ENCODE measurements at regions of chr17 and their contacts with region 1.

Region 1: GRCh38 chr17:17237026-17237799 is at the start of gene FLCN:
- DNase-seq: peak; percentile 92
- H3K4me3 ChIP-seq: peak within 1 kb of the TSS; percentile 76 to 97 (median 89)
- H3K27ac ChIP-seq: peak within 1 kb of the TSS; percentile 88 to 96 (median 90)
- H3K4me1 ChIP-seq: peaks cover 10 to 41% (median 16%) of the 10 kb centered on the region in 4 donors
- H3K27me3 ChIP-seq: no peaks in the 10 kb centered on the region
- CTCF ChIP-seq: peak in 1 of 5 experiments; percentile 35
- EP300 ChIP-seq: no peak
- POLR2A ChIP-seq: peak; percentile 76
- total RNA-seq, gene FLCN: 43.0 to 560 (median 81.1) TPM

Region 2: DNA sequence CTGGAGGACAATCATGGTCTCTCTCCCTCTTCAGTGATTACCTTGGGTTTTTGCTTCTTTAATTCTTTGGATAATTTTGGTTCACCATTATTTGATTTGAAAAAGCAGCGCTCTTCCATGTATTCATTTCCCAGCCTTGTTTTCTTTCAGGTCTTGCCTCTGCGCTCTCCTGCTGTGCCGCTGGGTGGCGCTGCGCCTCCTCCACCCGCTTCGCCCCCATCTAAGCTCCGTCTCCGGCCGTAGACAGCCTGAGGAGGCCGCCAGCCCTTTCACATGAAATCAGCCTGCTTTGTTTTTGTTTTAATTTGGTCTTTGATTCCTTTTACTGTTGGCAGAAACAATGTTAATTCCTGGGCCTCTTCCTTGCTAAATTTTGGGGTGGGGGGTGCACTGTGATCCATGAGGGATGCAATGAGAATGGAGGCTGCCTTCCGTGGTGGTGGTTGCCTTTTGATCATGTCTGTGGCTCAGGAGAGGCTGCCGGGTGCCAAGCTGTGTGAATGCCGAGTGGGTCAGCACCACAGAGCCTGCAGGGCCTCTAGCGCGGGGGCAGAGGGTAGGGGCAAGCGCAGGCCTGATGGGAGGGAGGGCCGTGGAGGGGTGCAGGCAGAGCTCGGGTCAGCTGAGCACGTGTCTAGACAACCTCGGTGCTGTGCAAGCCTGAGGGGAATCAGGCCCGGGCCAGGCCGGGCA is 95.2 kb before region 1 on chr17:
- in situ Hi-C with region 1: no loop called
- intact Hi-C with region 1: loop called (anchors 10 kb)
- DNase-seq: no peak
- H3K4me3 ChIP-seq: no peak overlapping the region
- H3K27ac ChIP-seq: no peak overlapping the region
- H3K4me1 ChIP-seq: peaks cover 0 to 3% (median 0%) of the 10 kb centered on the region in 4 donors
- H3K27me3 ChIP-seq: no peaks in the 10 kb centered on the region
- CTCF ChIP-seq: peak; percentile 58 to 73 (median 63)
- EP300 ChIP-seq: no peak
- POLR2A ChIP-seq: no peak

Region 3: GRCh38 chr17:17216776-17217175 is 20.4 kb before region 1 on chr17:
- in situ Hi-C with region 1: no loop called
- intact Hi-C with region 1: loop called (anchors 1 kb)
- DNase-seq: no peak
- H3K4me3 ChIP-seq: no peak overlapping the region
- H3K27ac ChIP-seq: no peak overlapping the region
- H3K4me1 ChIP-seq: no peaks in the 10 kb centered on the region
- H3K27me3 ChIP-seq: no peaks in the 10 kb centered on the region
- CTCF ChIP-seq: no peak
- EP300 ChIP-seq: no peak
- POLR2A ChIP-seq: no peak

Region 4: GRCh38 chr17:17322516-17323510 is 85.6 kb after region 1 on chr17:
- in situ Hi-C with region 1: no loop called
- intact Hi-C with region 1: no loop called
- DNase-seq: no peak
- H3K4me3 ChIP-seq: no peak overlapping the region
- H3K27ac ChIP-seq: no peak overlapping the region
- H3K4me1 ChIP-seq: no peaks in the 10 kb centered on the region
- H3K27me3 ChIP-seq: no peaks in the 10 kb centered on the region
- CTCF ChIP-seq: no peak
- EP300 ChIP-seq: no peak
- POLR2A ChIP-seq: no peak